T-cell (primary cell): ENCODE measurements at regions of chr7 and their contacts with region 1.

Region 1: GRCh38 chr7:107743567-107744344 is at the start of gene CBLL1:
- DNase-seq: peak; percentile 95 to 99 (median 97)
- ATAC-seq: peak; percentile 92 to 96 (median 92)
- H3K4me3 ChIP-seq: peak within 1 kb of the TSS; percentile 78 to 99
- H3K4me3 Mint-ChIP-seq: peak within 1 kb of the TSS; percentile 94 to 97 (median 96)
- H3K27ac ChIP-seq: peak within 1 kb of the TSS; percentile 100
- H3K27ac Mint-ChIP-seq: peak within 1 kb of the TSS; percentile 100
- H3K4me1 ChIP-seq: peaks cover 22 to 37% of the 10 kb centered on the region in 2 experiments
- H3K4me1 Mint-ChIP-seq: peaks cover 52 to 55% (median 55%) of the 10 kb centered on the region in 3 donors
- H3K27me3 ChIP-seq: no peaks in the 10 kb centered on the region
- H3K27me3 Mint-ChIP-seq: no peaks in the 10 kb centered on the region
- total RNA-seq, gene CBLL1: 50.5 to 70.1 (median 61.6) TPM

Region 2: GRCh38 chr7:107563775-107564552 is 179.8 kb before region 1 on chr7 and contains the starts of genes COG5 and DUS4L:
- CTCF ChIA-PET with region 1: interaction called, 3 to 17 read pairs
- POLR2A ChIA-PET with region 1: interaction called in 1 of 2 experiments, 3 read pairs
- DNase-seq: peak; percentile 66 to 94 (median 84)
- ATAC-seq: peak; percentile 89 to 93 (median 90)
- H3K4me3 ChIP-seq: peak within 1 kb of the TSS; percentile 91 to 97
- H3K4me3 Mint-ChIP-seq: peak within 1 kb of the TSS; percentile 79 to 88 (median 88)
- H3K27ac ChIP-seq: peak within 1 kb of the TSS; percentile 91
- H3K27ac Mint-ChIP-seq: peak within 1 kb of the TSS; percentile 88 to 90
- H3K4me1 ChIP-seq: peaks cover 13 to 37% of the 10 kb centered on the region in 2 experiments
- H3K4me1 Mint-ChIP-seq: peaks cover 58 to 63% (median 61%) of the 10 kb centered on the region in 3 donors
- H3K27me3 ChIP-seq: no peaks in the 10 kb centered on the region
- H3K27me3 Mint-ChIP-seq: no peaks in the 10 kb centered on the region
- total RNA-seq, gene COG5: 37.3 to 83.8 (median 55.4) TPM
- total RNA-seq, gene DUS4L: 9.4 to 14.7 (median 10.8) TPM

Region 3: DNA sequence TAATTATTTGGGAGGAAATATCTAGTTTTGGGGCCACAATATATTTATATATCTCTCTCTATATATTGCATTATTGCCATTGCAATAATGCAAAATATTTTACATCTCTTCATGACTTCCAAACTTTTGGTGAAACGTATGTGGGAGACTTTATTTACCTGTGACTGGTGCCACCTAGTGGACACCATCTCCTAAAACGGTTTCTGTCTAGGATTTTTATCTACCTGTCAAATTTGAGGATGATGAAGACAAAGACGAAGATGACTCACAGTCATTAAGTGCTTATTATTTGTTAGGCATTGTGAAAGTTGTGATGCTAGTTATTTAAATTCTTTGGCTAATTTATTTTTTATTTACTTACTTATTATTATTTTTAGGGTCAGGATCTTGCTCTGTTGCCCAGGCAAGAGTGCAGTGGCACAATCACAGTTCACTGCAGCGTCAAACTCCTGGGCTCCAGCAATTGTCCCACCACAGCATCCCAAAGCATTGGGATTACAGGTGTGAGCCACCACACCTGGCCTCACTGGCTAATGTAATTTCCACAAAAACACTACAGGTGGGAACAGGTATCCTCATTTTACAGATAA is 18.5 kb before region 1 on chr7:
- CTCF ChIA-PET with region 1: interaction called, 4 to 12 read pairs
- POLR2A ChIA-PET with region 1: no interaction called
- DNase-seq: peak in 30 of 35 experiments; percentile 4 to 78 (median 30)
- ATAC-seq: peak in 2 of 4 experiments; percentile 44 to 48
- H3K4me3 ChIP-seq: no peak overlapping the region
- H3K4me3 Mint-ChIP-seq: no peak overlapping the region
- H3K27ac ChIP-seq: no peak overlapping the region
- H3K27ac Mint-ChIP-seq: no peak overlapping the region
- H3K4me1 ChIP-seq: no peaks in the 10 kb centered on the region
- H3K4me1 Mint-ChIP-seq: no peaks in the 10 kb centered on the region
- H3K27me3 ChIP-seq: peaks cover 2% of the 10 kb centered on the region in 2 experiments
- H3K27me3 Mint-ChIP-seq: peaks cover 8 to 15% of the 10 kb centered on the region in 2 donors

Region 4: GRCh38 chr7:107890962-107891635 is 147.3 kb after region 1 on chr7 and contains the start of gene DLD:
- CTCF ChIA-PET with region 1: interaction called in 1 of 2 experiments, 18 read pairs
- POLR2A ChIA-PET with region 1: interaction called in 1 of 2 experiments, 13 read pairs
- DNase-seq: peak; percentile 84 to 97 (median 93)
- ATAC-seq: peak; percentile 97 to 99 (median 99)
- H3K4me3 ChIP-seq: peak within 1 kb of the TSS; percentile 77 to 90
- H3K4me3 Mint-ChIP-seq: peak within 1 kb of the TSS; percentile 96 to 98 (median 98)
- H3K27ac ChIP-seq: peak within 1 kb of the TSS; percentile 95
- H3K27ac Mint-ChIP-seq: peak within 1 kb of the TSS; percentile 94 to 98
- H3K4me1 ChIP-seq: peaks cover 18 to 24% of the 10 kb centered on the region in 2 experiments
- H3K4me1 Mint-ChIP-seq: peaks cover 49 to 52% (median 49%) of the 10 kb centered on the region in 3 donors
- H3K27me3 ChIP-seq: no peaks in the 10 kb centered on the region
- H3K27me3 Mint-ChIP-seq: no peaks in the 10 kb centered on the region
- total RNA-seq, gene DLD: 32.3 to 63.6 (median 41.9) TPM